PC-9 (cell line): ENCODE measurements at regions of chr1 and their contacts with region 1.

Region 1: GRCh38 chr1:191608367-191608766 is 549.9 kb upstream of the RGS18 start:
- DNase-seq: no peak
- H3K4me3 ChIP-seq: no peak overlapping the region
- H3K27ac ChIP-seq: no peak overlapping the region
- H3K4me1 ChIP-seq: no peaks in the 10 kb centered on the region
- H3K27me3 ChIP-seq: no peaks in the 10 kb centered on the region
- CTCF ChIP-seq: no peak

Region 2: GRCh38 chr1:191592039-191592438 is 16.3 kb before region 1 on chr1:
- CTCF ChIA-PET with region 1: interaction called, 11 read pairs
- POLR2A ChIA-PET with region 1: no interaction called
- intact Hi-C with region 1: no loop called
- DNase-seq: no peak
- H3K4me3 ChIP-seq: no peak overlapping the region
- H3K27ac ChIP-seq: no peak overlapping the region
- H3K4me1 ChIP-seq: no peaks in the 10 kb centered on the region
- H3K27me3 ChIP-seq: no peaks in the 10 kb centered on the region
- CTCF ChIP-seq: no peak